Activated CD4-positive, alpha-beta memory T cell treated with anti-CD3 and anti-CD28 coated beads for 36 hours (primary cell): ENCODE measurements at regions of chr11 and their contacts with region 1.

Region 1: DNA sequence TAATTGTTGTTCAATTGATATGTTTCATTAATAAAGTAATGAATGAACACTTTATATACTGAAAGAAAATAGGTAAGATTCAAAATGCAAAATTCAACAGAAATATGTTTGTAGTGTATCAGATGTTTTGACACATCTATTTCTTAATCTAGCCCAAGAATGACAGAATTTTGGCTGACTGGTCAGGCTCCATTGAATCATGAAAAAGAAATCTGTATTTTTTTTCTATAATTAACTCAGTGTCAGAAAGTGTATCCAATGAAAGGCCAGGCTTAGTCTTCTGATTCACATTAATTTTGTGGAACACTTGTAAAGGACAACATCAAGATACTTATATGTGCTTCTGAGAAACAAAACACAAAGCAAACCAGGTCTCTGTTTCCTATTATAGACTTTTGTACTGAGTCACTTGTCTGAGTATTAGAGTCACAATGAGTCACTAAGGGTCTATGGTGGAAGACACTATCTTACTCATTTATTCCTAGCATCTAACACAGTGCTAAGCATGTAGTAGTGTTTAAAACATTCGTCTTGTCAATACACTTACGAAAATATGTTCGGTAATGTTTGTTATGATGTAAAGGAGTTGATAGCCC is 297.7 kb upstream of the CCDC90B start:
- DNase-seq: no peak
- H3K4me3 Mint-ChIP-seq: no peak overlapping the region
- H3K27ac Mint-ChIP-seq: no peak overlapping the region
- H3K4me1 Mint-ChIP-seq: no peaks in the 10 kb centered on the region
- H3K27me3 Mint-ChIP-seq: peaks cover 3% of the 10 kb centered on the region

Region 2: DNA sequence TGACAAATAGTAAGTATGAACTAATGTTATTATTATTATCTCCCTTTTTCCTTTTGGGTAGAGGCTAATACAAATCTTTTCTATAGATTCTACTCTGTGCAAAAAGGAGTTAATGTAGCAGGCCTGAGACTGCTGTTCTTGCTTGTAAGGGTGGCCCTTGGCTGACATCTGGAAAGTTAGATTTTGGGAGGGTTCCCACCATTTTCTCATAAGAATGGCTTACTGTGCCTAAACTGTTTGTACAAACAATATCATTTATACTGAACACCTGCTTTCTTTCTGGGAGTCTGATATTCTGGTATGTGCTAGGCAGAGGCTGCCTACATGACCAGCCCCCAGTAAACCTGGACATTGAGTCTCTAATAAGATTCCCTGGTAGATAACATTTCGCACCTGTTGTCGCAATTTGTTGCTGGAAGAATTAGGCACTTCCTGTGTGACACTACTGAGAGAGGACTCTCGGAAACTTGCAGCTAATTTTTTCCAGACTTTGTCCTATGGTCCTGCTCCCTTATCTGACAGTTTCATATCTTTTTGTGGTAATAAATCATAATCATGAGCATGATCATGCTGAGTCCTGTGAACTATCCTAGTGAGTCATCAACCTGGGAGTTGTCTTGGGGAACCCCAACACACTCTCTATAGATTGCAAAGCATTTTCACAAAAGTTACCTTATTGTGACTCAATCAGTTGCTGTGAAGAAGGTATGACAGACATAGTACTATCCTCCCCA is 40.0 kb before region 1 on chr11:
- CTCF ChIA-PET with region 1: no interaction called
- POLR2A ChIA-PET with region 1: no interaction called
- intact Hi-C with region 1: loop called (anchors 1 kb)
- DNase-seq: no peak
- H3K4me3 Mint-ChIP-seq: no peak overlapping the region
- H3K27ac Mint-ChIP-seq: no peak overlapping the region
- H3K4me1 Mint-ChIP-seq: no peaks in the 10 kb centered on the region
- H3K27me3 Mint-ChIP-seq: no peaks in the 10 kb centered on the region

Region 3: GRCh38 chr11:83641511-83641910 is 57.7 kb after region 1 on chr11:
- CTCF ChIA-PET with region 1: no interaction called
- POLR2A ChIA-PET with region 1: no interaction called
- intact Hi-C with region 1: no loop called
- DNase-seq: no peak
- H3K4me3 Mint-ChIP-seq: no peak overlapping the region
- H3K27ac Mint-ChIP-seq: no peak overlapping the region
- H3K4me1 Mint-ChIP-seq: no peaks in the 10 kb centered on the region
- H3K27me3 Mint-ChIP-seq: peaks cover 2% of the 10 kb centered on the region